Activated T-helper 1 cell treated with anti-CD3 and anti-CD28 coated beads, Interleukin-12 subunit alpha, Interleukin-12 subunit beta, Interleukin-2, Interleukin-4 antibody, amounts not matched to agents 30 ng/mL and 10 ng/mL and 1 ng/mL, durations not matched to agents 14 hours and 24 hours and 36 hours (primary cell): ENCODE measurements at regions of chr5 and their contacts with region 1.

Region 1: GRCh38 chr5:119470851-119471451 is 18.7 kb downstream of the HSD17B4 start:
- DNase-seq: no peak
- H3K4me3 Mint-ChIP-seq: no peak overlapping the region
- H3K27ac Mint-ChIP-seq: no peak overlapping the region
- H3K4me1 Mint-ChIP-seq: no peaks in the 10 kb centered on the region
- H3K27me3 Mint-ChIP-seq: no peaks in the 10 kb centered on the region

Region 2: GRCh38 chr5:119743927-119744326 is 273.0 kb after region 1 on chr5:
- intact Hi-C with region 1: loop called (anchors 1 kb)
- DNase-seq: no peak
- H3K4me3 Mint-ChIP-seq: no peak overlapping the region
- H3K27ac Mint-ChIP-seq: no peak overlapping the region
- H3K4me1 Mint-ChIP-seq: no peaks in the 10 kb centered on the region
- H3K27me3 Mint-ChIP-seq: no peaks in the 10 kb centered on the region

Region 3: DNA sequence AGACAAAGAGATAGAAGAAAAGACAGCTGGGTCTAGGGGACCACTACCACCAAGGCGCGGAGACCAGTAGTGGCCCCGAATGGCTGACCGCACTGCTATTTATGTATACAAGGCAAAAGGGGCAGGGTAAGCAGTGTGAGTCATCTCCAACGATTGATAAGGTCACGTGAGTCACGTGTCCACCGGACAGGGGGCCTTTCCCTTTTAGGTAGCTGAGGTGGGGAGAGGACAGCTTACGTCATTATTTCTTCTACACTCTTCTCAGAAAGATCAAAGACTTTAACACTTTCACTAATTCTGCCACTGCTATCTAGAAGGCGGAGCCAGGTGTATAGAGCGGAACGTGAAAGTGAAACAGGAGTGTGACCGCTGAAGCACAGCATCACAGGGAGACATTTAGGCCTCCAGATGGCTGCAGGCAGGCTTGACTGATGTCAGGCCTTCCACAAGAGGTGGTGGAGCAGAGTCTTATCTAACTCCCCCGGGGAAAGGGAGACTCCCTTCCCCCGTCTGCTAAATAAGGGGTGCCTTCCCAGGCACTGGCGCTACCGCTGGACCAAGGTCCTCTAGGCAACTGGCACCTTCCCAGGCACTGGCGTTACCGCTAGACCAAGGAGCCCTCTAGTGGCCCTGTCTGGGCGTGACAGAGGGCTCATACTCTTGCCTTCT is 987.0 kb after region 1 on chr5:
- intact Hi-C with region 1: loop called (anchors 2 kb)
- DNase-seq: peak; percentile 37
- H3K4me3 Mint-ChIP-seq: peak overlapping the region; percentile 58
- H3K27ac Mint-ChIP-seq: no peak overlapping the region
- H3K4me1 Mint-ChIP-seq: peaks cover 6% of the 10 kb centered on the region
- H3K27me3 Mint-ChIP-seq: peaks cover 22% of the 10 kb centered on the region